Activated CD4-positive, alpha-beta T cell treated with anti-CD3 and anti-CD28 coated beads, Interleukin-2, amount 10 ng/mL, durations not matched to agents 7 days and 5 days (primary cell): ENCODE measurements at regions of chr1 and their contacts with region 1.

Region 1: DNA sequence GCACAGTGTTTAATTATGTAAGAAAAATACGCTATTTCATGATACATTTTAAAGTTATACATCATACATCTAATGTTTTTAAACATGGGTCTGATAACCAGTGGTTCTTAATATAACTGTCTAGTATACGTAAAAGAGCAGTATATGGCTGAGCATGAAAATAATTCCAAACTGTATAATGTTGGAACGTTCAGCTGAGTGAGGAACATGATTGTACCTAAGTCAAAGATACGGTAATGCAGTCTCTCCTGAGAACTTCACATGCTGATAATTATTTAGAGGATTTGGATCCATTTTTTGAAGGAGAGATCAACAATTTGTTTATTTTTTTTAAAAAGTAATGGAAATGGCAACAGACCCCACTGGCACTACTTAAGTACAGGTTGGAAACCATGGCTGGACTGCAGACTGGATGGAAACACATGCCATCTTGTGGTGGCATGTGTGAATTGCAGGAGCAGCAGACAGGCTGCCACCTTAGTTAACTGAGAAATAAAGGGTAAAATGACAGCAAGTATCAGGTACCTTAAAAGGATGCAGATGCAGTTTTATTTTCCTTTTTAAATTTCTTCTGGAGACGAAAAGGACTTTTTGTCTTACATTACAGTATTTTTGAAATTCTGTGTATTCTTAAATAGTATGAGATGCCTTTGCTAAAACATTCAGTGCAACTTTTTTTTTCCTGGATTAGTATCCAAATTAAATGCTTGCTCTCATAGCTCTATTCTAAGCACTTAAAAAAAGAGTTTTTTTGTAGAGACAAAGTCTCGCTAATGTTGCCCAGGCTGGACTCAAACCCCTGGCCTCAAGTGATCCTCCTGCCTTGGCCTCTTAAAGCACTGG is 73.8 kb downstream of the MTR start:
- DNase-seq: peak; percentile 55
- H3K4me3 Mint-ChIP-seq: no peak overlapping the region
- H3K27ac Mint-ChIP-seq: no peak overlapping the region
- H3K4me1 Mint-ChIP-seq: peaks cover 2% of the 10 kb centered on the region
- H3K27me3 Mint-ChIP-seq: no peaks in the 10 kb centered on the region

Region 2: DNA sequence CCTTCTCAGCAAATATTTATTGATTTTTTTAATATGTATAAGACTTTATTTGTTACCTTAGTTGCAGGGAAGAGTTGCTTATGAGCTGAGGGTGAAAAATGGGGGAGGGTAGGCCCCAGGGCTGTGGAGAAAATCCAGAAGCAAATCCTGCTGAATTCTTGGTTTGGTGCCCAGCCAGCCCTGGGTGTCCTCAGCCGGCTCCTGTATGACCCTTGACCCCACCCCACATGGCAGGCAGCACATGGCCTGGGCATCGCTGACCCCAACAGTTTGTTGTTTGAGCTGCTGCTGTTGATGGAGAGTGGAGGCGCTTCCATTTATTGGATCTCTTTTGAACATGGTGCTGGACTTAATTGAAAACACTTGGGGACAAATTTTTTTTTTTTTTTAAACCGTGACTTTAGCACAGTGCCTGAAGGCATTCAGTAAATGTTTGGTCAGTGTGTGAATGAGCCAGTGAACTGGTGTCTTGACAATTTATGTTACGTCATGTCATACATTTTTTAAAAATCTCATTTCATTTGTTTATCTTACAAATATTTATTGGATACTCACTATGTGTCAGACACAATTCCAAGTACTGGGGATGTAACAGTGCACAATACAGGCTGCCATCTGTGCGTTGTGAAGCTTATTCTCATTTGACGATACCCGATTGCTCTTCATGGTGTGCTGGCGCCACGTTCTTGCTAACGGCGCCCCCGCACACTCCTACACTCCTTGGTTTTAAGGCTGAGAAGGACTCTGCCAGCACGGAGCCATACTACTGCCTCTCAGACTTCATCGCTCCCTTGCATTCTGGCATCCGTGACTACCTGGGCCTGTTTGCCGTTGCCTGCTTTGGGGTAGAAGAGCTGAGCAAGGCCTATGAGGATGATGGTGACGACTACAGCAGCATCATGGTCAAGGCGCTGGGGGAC is 25.0 kb after region 1 on chr1:
- CTCF ChIA-PET with region 1: interaction called, 3 read pairs
- POLR2A ChIA-PET with region 1: interaction called, 10 read pairs
- DNase-seq: no peak
- H3K4me3 Mint-ChIP-seq: no peak overlapping the region
- H3K27ac Mint-ChIP-seq: no peak overlapping the region
- H3K4me1 Mint-ChIP-seq: no peaks in the 10 kb centered on the region
- H3K27me3 Mint-ChIP-seq: no peaks in the 10 kb centered on the region

Region 3: DNA sequence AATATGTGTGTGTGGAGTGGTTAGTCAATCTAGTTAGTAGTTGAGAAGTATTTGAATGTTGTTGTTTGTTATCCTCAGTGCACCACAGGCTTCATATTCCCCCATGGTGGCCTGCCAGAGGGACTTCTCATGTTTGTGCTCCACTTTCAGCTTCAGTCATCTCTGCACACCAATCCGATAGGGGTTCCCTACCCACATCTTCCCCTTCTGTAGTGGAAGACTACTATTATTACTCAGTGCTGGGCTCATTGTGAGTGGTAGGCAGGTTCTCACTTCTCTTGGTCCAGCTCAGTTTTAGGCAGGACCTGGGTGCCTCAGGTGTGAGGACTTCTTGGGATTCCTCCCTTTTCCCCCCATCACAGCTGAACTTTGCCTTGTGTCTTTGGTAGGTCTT is 121.2 kb after region 1 on chr1:
- CTCF ChIA-PET with region 1: no interaction called
- POLR2A ChIA-PET with region 1: no interaction called
- DNase-seq: no peak
- H3K4me3 Mint-ChIP-seq: no peak overlapping the region
- H3K27ac Mint-ChIP-seq: no peak overlapping the region
- H3K4me1 Mint-ChIP-seq: no peaks in the 10 kb centered on the region
- H3K27me3 Mint-ChIP-seq: peaks cover 7% of the 10 kb centered on the region